ENCODE measurements at regions of chr7 and their contacts with region 1.

Region 1: DNA sequence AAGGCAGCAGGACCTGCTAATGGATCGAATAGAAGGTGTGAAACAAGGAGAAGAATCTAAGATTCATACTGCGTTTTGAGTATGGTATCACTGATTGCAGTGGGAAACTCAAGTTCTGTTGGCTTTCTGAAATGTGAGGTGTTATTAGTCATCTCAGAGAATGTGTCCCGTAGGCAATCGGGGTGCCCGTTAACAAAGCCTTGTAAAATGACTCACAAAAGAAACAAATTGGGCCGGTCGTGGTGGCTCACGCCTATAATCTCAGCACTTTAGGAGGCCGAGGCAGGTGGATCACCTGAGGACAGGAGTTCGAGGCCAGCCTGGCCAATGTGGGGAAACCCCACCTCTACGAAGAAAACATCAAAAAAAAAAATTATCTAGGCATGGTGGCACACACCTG is 118.2 kb upstream of the C7orf33 start:
- DNase-seq: no peak
- H3K4me3 ChIP-seq: no peak overlapping the region
- H3K27ac ChIP-seq: no peak overlapping the region
- H3K27me3 ChIP-seq: no peaks in the 10 kb centered on the region
- CTCF ChIP-seq: no peak

Region 2: GRCh38 chr7:148286150-148286549 is 186.3 kb before region 1 on chr7:
- intact Hi-C with region 1: loop called in 1 of 2 experiments (anchors 5 kb)
- DNase-seq: no peak
- H3K4me3 ChIP-seq: no peak overlapping the region
- H3K27ac ChIP-seq: no peak overlapping the region
- H3K27me3 ChIP-seq: no peaks in the 10 kb centered on the region
- CTCF ChIP-seq: peak in 53 of 56 donors; percentile 23 to 75 (median 48)

Region 3: DNA sequence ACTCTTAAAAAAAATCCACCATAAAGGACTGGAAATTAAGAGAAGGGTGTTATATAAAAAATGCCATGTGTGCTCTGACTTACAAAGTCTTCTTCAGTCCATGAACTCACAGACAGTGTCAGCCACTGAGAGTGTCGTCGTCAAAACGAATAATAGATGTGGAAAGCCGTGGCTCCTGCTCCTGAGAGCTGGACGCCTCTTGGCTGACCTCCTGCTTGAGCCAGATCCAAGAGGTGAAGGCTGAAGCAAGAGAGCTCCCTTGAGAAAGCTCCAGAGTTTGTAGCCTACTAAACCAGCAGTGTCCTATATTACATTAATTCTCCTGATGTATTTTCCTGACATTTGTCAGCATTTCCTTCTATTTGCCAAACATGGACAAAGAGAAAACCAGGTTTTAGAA is 116.1 kb before region 1 on chr7:
- intact Hi-C with region 1: no loop called
- DNase-seq: no peak
- H3K4me3 ChIP-seq: no peak overlapping the region
- H3K27ac ChIP-seq: no peak overlapping the region
- H3K27me3 ChIP-seq: no peaks in the 10 kb centered on the region
- CTCF ChIP-seq: no peak